Activated naive CD4-positive, alpha-beta T cell treated with anti-CD3 and anti-CD28 coated beads for 36 hours (primary cell): ENCODE measurements at regions of chr14 and their contacts with region 1.

Region 1: DNA sequence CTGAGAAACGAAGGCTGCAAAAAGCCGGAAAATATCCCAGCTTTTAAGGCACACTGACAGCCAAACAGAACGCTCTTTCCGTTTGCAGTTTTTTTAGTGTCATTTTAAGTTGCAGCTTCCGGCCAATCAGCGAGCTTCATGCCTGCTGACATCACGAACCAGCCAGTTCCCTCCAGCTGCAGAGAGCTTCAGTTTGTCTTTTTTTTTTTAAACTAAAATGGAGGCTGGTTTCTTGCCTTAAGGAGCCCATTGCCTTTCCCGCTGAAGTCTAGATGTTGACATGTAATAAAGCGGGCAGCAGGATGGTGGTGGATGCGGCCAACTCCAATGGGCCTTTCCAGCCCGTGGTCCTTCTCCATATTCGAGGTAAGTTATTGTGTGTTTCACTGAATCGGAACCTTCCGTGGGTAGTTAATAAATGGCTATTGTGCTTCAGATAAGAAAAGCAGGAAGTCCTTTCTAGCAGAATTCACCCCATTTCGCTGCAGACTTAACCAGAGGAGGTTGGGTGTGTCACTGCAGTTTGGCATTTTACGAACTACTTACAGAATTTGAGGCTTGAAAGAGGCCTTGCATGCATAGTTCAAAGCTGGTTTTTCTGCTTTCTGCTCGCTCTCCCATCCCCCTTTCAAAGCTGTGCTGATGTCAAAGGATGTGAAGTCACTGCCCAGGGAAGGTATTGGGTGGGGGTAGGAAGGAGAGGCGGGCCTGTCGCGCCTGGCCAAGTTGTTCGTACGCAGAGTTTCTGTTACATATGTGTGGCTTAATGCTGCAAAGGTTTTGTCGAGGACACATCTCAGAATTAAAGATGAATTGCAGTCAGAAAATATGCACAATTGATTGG is 48.4 kb downstream of the PPP2R5C start:
- DNase-seq: peak; percentile 94
- H3K4me3 Mint-ChIP-seq: peak overlapping the region; percentile 83
- H3K27ac Mint-ChIP-seq: peak overlapping the region; percentile 95
- H3K4me1 Mint-ChIP-seq: peaks cover 42% of the 10 kb centered on the region
- H3K27me3 Mint-ChIP-seq: no peaks in the 10 kb centered on the region

Region 2: GRCh38 chr14:101731187-101732080 is 78.5 kb before region 1 on chr14:
- CTCF ChIA-PET with region 1: interaction called, 4 read pairs
- intact Hi-C with region 1: loop called (anchors 1 kb)
- DNase-seq: peak; percentile 96
- H3K4me3 Mint-ChIP-seq: peak overlapping the region; percentile 71
- H3K27ac Mint-ChIP-seq: peak overlapping the region; percentile 98
- H3K4me1 Mint-ChIP-seq: peaks cover 53% of the 10 kb centered on the region
- H3K27me3 Mint-ChIP-seq: no peaks in the 10 kb centered on the region

Region 3: DNA sequence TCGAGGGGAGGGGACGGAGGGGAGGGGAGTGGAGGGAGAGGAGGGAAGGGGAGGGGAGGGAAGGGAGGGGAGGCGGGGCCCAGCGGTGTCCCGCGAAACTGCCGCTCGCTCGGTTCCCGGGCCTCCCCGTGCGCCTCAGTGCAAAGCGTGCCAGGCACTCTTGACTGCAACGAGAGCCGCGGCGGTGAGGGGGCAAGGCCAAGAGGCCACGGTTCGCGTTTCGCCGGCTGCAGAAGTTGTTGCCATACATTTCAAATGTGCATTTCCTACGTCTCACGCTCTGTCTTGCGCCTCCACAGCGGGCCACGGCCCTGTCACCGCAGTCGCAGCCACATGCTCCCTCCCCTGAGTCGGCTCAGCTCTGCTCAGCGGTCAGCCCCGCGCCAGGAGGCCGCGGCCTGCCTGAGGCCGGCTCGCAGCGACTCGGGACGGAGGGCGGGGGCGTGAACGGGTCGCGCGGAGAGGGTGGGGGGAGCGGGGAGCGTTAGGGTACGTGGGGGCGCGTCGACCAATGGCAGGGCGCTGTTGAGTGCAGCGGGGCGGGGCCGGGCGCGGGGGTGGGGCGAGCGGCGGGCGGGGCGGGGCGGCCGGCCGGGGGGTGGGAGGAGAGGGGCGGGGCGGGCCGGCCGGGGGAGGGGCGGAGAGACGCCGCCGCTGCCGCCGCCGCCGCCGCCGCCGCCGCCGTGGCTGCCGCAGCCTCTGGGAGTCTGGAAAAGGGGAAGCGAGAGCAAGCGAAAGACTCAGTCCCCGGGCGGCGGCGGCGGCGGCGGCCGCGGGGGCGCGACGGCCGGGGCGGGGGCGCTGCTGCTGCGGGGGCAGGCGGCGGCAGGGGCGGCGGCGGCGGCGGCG is 48.6 kb before region 1 on chr14 and contains the start of gene PPP2R5C:
- CTCF ChIA-PET with region 1: interaction called, 4 read pairs
- intact Hi-C with region 1: loop called (anchors 1 kb)
- DNase-seq: peak; percentile 85
- H3K4me3 Mint-ChIP-seq: peak within 1 kb of the TSS; percentile 91
- H3K27ac Mint-ChIP-seq: peak within 1 kb of the TSS; percentile 79
- H3K4me1 Mint-ChIP-seq: peaks cover 42% of the 10 kb centered on the region
- H3K27me3 Mint-ChIP-seq: no peaks in the 10 kb centered on the region
- total RNA-seq, gene PPP2R5C: 280 to 294 TPM

Region 4: DNA sequence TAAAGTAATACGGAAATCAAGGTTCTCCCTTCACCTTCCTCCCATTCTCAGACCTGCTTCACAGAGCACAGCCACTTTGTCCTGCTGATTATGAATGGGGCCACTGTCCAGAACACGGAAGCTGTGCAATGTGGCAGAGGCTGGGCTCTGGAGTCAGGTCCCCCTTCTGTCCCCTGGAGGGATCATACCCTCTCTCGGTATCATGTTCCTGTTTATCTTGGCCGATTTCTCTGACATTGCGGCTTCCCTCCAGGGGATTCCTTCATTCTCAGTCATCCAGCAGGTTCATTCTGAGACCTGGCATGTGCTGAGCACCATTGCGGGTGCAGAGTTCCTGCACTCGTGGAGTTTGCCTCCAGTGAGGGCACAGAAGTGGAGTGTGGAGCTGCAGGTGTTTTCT is 37.1 kb before region 1 on chr14:
- CTCF ChIA-PET with region 1: interaction called, 13 read pairs
- intact Hi-C with region 1: no loop called
- DNase-seq: no peak
- H3K4me3 Mint-ChIP-seq: no peak overlapping the region
- H3K27ac Mint-ChIP-seq: no peak overlapping the region
- H3K4me1 Mint-ChIP-seq: peaks cover 13% of the 10 kb centered on the region
- H3K27me3 Mint-ChIP-seq: no peaks in the 10 kb centered on the region

Region 5: GRCh38 chr14:101791919-101792572 is 17.8 kb before region 1 on chr14:
- CTCF ChIA-PET with region 1: no interaction called
- intact Hi-C with region 1: loop called (anchors 1 kb)
- DNase-seq: no peak
- H3K4me3 Mint-ChIP-seq: no peak overlapping the region
- H3K27ac Mint-ChIP-seq: peak overlapping the region; percentile 53
- H3K4me1 Mint-ChIP-seq: peaks cover 29% of the 10 kb centered on the region
- H3K27me3 Mint-ChIP-seq: no peaks in the 10 kb centered on the region

Region 6: DNA sequence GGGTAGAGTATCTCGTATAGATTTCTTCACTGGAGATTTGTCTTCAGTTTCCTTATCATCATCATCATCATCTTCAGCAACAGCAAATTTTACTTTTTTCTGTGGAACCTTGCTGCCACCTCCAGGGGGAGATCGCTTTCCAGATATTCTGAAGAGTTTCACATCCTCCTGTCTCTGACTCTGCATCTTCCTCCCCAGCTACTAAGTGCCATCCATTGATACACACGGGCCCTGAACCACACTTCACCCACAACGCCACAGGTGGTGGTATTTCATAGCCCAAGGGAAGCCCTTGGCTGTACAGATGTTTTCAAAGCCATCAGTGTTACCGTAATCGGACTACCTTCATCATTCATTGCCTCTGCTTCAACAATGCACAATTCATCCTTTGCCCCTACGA is 33.8 kb after region 1 on chr14:
- CTCF ChIA-PET with region 1: interaction called, 4 read pairs
- intact Hi-C with region 1: loop called (anchors 1 kb)
- DNase-seq: peak; percentile 80
- H3K4me3 Mint-ChIP-seq: no peak overlapping the region
- H3K27ac Mint-ChIP-seq: peak overlapping the region; percentile 74
- H3K4me1 Mint-ChIP-seq: peaks cover 88% of the 10 kb centered on the region
- H3K27me3 Mint-ChIP-seq: no peaks in the 10 kb centered on the region

Region 7: GRCh38 chr14:102805371-102806246 is 995.7 kb after region 1 on chr14:
- CTCF ChIA-PET with region 1: no interaction called
- intact Hi-C with region 1: loop called (anchors 10 kb)
- DNase-seq: peak; percentile 63
- H3K4me3 Mint-ChIP-seq: peak overlapping the region; percentile 54
- H3K27ac Mint-ChIP-seq: peak overlapping the region; percentile 99
- H3K4me1 Mint-ChIP-seq: peaks cover 80% of the 10 kb centered on the region
- H3K27me3 Mint-ChIP-seq: no peaks in the 10 kb centered on the region